Breast epithelium (tissue), 4 donors: ENCODE measurements at regions of chr4 and their contacts with region 1.

Region 1: DNA sequence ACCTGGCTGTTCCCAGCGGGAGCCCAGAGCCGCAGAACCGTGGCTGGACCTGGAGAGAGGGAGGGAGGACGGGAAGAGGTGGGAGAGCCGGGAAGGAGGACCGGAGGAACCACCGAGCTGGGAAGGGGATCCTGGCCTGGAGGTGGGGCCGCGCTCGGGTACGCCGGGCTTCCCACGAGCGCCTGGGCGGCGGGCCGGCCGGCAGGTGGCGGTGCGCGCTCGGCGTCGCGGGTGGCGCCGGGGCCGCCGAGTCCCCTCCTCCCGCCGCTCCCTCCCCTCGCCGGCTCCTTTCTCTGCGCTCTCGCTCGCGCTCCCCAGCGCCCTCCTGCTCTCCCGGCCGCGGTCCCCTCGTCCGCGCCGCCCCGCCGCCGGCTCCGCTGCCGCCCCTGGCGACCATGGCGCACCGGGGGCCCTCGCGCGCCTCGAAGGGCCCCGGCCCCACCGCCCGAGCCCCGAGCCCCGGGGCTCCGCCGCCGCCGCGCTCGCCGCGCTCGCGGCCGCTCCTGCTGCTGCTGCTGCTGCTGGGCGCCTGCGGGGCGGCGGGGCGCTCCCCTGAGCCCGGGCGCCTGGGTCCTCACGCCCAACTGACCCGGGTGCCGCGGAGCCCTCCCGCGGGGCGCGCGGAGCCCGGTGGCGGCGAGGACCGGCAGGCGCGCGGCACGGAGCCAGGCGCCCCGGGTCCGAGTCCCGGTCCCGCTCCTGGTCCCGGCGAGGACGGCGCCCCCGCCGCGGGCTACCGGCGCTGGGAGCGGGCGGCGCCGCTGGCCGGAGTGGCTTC is at the start of gene SORCS2:
- DNase-seq: peak in 1 of 2 donors; percentile 62
- H3K4me3 ChIP-seq: peak within 1 kb of the TSS; percentile 46 to 65 (median 49)
- H3K27ac ChIP-seq: no peak within 1 kb of the TSS
- H3K4me1 ChIP-seq: peaks cover 6 to 9% of the 10 kb centered on the region in 2 donors
- H3K27me3 ChIP-seq: peaks cover 0 to 66% of the 10 kb centered on the region in 2 donors
- CTCF ChIP-seq: peak in 2 of 3 donors; percentile 23 to 84
- POLR2A ChIP-seq: no peak
- total RNA-seq, gene SORCS2: 0.66 to 1.3 (median 0.80) TPM

Region 2: DNA sequence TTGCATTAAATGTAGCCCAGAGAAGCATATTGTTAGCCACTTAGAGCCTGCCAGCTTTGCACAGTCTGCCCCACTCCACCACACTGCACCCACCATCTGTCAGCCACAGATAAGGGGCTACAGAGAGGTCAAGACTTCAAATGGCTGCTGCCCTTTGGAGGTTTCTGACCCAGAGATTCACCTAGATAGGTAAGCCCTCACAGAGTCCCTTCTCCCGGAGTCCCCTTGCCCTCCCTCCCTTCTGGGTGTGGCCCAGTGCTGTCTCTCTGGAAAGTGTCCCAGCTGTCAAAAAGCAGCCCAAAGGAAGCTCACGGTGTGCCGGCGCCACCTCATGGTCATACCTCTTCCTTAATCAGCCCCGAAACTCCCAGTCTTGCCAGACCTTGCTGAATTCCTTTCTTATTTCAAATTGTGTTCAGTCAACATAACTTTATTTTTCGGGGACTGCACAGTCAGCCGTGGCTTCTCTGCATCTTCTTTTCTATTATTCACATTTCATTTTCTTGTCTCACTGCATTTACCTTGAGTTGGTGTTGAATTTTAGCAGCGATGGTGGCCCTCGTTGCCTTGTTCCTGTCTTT is 110.5 kb before region 1 on chr4:
- intact Hi-C with region 1: no loop called
- DNase-seq: peak in 1 of 2 donors; percentile 65
- H3K4me3 ChIP-seq: no peak overlapping the region
- H3K27ac ChIP-seq: no peak overlapping the region
- H3K4me1 ChIP-seq: no peaks in the 10 kb centered on the region
- H3K27me3 ChIP-seq: no peaks in the 10 kb centered on the region
- CTCF ChIP-seq: peak in 2 of 3 donors; percentile 28 to 47
- POLR2A ChIP-seq: no peak

Region 3: DNA sequence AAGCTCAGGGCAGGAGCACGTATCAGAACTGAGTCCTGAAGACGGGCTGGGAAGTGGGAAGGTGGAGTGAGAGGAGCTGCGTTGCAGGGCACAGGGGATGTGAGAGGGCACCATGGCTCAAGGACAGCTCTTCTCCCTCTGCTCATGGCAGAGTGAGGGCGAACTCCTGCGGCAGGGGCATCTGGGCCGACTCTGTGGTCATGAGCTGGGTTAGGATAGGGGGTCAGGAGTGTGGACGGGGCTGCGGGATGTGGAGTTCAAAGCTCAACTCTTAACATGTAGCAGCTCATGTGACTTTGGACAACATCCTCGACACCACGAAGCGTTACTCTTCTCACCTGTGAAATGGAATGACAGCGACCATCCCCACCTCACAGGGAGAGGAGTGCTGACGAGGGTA is 19.5 kb before region 1 on chr4:
- intact Hi-C with region 1: loop called (anchors 1 kb)
- DNase-seq: peak in 1 of 2 donors; percentile 37
- H3K4me3 ChIP-seq: no peak overlapping the region
- H3K27ac ChIP-seq: no peak overlapping the region
- H3K4me1 ChIP-seq: no peaks in the 10 kb centered on the region
- H3K27me3 ChIP-seq: no peaks in the 10 kb centered on the region
- CTCF ChIP-seq: no peak
- POLR2A ChIP-seq: no peak